AG04450 (cell line): ENCODE measurements at regions of chr14 and their contacts with region 1.

Region 1: DNA sequence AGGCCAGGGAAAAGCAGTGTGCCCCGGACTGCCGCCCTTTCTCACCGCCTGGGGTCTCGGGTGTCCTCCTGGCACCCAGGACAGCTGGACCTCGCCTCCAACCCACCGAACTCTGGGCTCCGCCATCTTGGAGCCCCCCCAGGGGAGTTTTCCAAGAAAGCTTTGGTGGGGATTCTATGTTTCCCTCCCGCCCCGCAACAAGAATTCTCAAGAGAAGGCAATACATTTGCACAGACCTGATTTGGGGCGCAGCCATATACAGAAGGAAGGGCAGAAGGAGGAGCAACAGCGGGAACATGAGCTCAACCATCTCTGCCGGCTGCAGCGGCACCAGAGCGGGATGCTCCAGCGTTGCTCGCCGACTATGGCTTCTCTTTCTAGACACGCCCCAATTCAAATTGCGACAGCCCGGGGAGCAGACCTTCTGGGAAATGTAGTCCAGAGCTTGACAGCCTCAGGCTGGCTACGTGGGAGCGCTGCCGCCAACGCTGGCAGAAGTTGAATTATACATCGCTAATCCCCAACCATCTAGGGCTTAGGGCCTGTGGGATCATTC is at the start of gene RDH11:
- DNase-seq: peak; percentile 76
- H3K4me3 ChIP-seq: peak within 1 kb of the TSS; percentile 94
- H3K27ac ChIP-seq: peak within 1 kb of the TSS; percentile 88
- H3K27me3 ChIP-seq: no peaks in the 10 kb centered on the region
- CTCF ChIP-seq: no peak
- polyA plus RNA-seq, gene RDH11: 101 and 109 TPM in 2 replicates

Region 2: DNA sequence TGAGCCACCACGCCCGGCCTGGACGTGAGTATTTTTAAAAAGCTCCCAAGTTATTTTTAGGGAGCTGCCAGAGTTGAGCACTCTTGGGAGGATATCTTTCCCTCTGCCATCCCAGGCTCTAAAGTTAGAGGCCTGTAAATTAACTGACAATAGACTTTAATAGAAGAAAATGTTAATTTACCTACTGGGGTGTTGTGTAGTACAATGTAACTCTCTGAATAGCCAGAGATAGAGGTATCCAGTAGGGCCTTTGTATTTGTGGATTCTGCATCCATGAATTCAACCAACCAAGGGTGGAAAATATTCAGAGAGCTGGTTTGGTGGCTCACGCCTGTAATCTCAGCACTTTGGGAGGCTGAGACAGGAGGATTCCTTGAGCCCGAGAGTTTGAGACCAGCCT is 87.8 kb before region 1 on chr14:
- CTCF ChIA-PET with region 1: no interaction called
- POLR2A ChIA-PET with region 1: no interaction called
- DNase-seq: no peak
- H3K4me3 ChIP-seq: no peak overlapping the region
- H3K27ac ChIP-seq: no peak overlapping the region
- H3K27me3 ChIP-seq: peaks cover 13% of the 10 kb centered on the region
- CTCF ChIP-seq: no peak

Region 3: DNA sequence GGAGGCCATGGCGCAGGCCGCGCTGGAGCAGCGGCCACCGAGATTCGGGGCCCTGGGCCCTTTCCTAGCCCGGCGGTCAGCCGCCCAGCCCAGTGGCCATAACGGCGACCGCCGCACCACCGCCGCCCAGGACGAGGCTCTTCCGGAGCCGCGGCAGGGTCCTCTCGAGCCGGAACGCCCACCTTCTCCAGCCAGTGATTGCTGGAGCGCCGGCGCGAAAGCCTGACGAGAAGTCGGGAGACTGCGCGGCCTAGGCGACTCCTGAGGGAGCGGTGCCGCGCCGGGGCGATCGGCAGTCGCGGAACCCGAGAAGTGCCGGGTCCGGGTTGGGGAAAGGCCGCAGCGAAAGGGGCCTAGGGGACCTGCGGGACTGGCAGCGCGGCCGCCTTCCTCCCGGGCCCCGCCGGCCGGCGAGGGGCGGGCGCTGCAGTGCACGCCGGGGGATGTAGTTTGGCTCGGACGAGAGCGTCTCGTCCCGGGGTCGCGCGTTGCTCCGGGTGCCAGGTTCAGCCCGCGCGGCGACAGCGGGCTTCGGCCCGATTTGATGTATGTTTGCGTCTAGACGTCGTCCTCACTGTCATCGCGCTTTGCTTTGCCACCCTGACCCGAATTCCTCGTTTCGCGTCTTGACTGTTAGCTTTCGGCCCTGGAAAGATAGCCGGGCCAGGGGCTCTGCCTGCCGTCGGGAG is 20.8 kb before region 1 on chr14 and contains the start of gene VTI1B:
- CTCF ChIA-PET with region 1: interaction called, 3 read pairs
- POLR2A ChIA-PET with region 1: interaction called, 10 read pairs
- DNase-seq: no peak
- H3K4me3 ChIP-seq: peak within 1 kb of the TSS; percentile 86
- H3K27ac ChIP-seq: peak within 1 kb of the TSS; percentile 96
- H3K27me3 ChIP-seq: no peaks in the 10 kb centered on the region
- CTCF ChIP-seq: peak; percentile 42
- polyA plus RNA-seq, gene VTI1B: 110 and 127 TPM in 2 replicates

Region 4: GRCh38 chr14:67749341-67750084 is 54.0 kb after region 1 on chr14:
- CTCF ChIA-PET with region 1: no interaction called
- POLR2A ChIA-PET with region 1: no interaction called
- DNase-seq: no peak
- H3K4me3 ChIP-seq: no peak overlapping the region
- H3K27ac ChIP-seq: no peak overlapping the region
- H3K27me3 ChIP-seq: no peaks in the 10 kb centered on the region
- CTCF ChIP-seq: no peak

Region 5: GRCh38 chr14:67798731-67799130 is 103.3 kb after region 1 on chr14:
- CTCF ChIA-PET with region 1: no interaction called
- POLR2A ChIA-PET with region 1: no interaction called
- DNase-seq: no peak
- H3K4me3 ChIP-seq: no peak overlapping the region
- H3K27ac ChIP-seq: no peak overlapping the region
- H3K27me3 ChIP-seq: no peaks in the 10 kb centered on the region
- CTCF ChIP-seq: no peak